ENCODE measurements at regions of chr2 and their contacts with region 1.

Region 1: GRCh38 chr2:39069136-39069515 is 51.7 kb downstream of the SOS1 start:
- DNase-seq: no peak
- H3K4me3 ChIP-seq: no peak overlapping the region
- H3K27ac ChIP-seq: no peak overlapping the region
- H3K4me1 ChIP-seq: no peaks in the 10 kb centered on the region
- H3K27me3 ChIP-seq: no peaks in the 10 kb centered on the region
- CTCF ChIP-seq: no peak
- POLR2A ChIP-seq: no peak

Region 2: DNA sequence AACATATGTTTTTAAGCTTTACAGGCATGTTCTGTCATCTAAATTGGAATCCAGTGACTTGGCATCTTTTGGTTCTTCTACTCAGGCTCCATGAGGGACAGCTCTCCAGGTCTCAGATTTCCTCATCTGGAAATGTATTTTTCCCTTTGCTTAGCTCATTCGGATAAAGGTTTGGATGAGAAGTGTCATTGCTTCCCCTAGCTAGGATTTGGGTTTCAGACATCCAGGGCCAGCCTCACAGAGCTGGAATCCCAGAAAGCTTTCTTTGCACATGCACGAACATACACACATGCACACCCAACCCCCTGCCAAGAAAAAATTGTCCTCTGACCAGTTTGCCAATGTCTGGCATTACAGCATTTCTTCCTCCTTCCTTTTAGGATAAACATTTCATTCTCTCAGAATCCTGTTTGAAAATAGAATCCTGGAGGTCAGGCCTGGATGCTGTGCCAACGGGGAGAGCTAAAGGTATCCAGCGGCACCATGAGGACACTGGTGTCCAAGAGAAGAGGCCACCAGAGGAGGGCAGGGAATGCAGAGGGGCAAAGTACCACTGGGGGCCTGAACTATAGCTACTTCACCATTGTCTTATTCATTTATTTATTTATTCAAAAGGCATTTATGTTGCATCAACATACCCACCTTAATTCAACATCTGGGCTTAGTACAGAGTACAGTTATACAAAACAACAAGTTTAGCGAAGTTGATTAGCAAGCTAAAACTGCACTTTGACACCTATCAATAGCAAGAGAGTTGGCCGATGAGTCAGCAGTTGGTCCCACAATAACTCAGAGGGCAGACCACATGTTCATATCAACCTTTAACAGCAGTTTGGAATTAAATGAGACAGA is 594.2 kb before region 1 on chr2:
- CTCF ChIA-PET with region 1: no interaction called
- POLR2A ChIA-PET with region 1: interaction called, 10 read pairs
- dilution Hi-C with region 1: no loop called
- intact Hi-C with region 1: no loop called
- DNase-seq: no peak
- H3K4me3 ChIP-seq: no peak overlapping the region
- H3K27ac ChIP-seq: no peak overlapping the region
- H3K4me1 ChIP-seq: no peaks in the 10 kb centered on the region
- H3K27me3 ChIP-seq: peaks cover 5 to 6% of the 10 kb centered on the region in 2 experiments
- CTCF ChIP-seq: no peak
- POLR2A ChIP-seq: no peak

Region 3: GRCh38 chr2:38997781-38998180 is 71.3 kb before region 1 on chr2:
- CTCF ChIA-PET with region 1: no interaction called
- POLR2A ChIA-PET with region 1: no interaction called
- dilution Hi-C with region 1: no loop called
- intact Hi-C with region 1: no loop called
- DNase-seq: peak; percentile 88
- H3K4me3 ChIP-seq: no peak overlapping the region
- H3K27ac ChIP-seq: peak overlapping the region; percentile 48
- H3K4me1 ChIP-seq: peaks cover 8% of the 10 kb centered on the region
- H3K27me3 ChIP-seq: no peaks in the 10 kb centered on the region
- CTCF ChIP-seq: no peak
- POLR2A ChIP-seq: no peak

Region 4: DNA sequence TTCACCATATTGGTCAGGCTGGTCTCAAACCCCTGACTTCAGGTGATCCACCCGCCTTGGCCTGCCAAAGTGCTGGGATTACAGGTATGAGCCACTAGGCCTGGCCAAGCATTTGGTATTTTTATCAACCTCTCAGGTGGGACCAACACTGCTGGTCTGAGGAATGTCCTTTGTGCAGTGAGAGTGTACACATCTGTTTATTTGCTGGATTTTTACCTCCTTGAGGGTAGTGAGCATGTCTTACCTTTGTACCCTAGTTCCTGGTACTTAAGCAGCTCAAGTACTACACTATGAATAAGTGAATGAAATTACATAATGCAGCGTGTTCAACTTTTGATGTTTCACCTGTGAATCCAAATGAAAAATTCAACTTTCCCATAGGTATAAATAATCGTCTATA is 21.9 kb after region 1 on chr2:
- CTCF ChIA-PET with region 1: no interaction called
- POLR2A ChIA-PET with region 1: interaction called, 12 read pairs
- dilution Hi-C with region 1: no loop called
- intact Hi-C with region 1: no loop called
- DNase-seq: no peak
- H3K4me3 ChIP-seq: no peak overlapping the region
- H3K27ac ChIP-seq: no peak overlapping the region
- H3K4me1 ChIP-seq: no peaks in the 10 kb centered on the region
- H3K27me3 ChIP-seq: no peaks in the 10 kb centered on the region
- CTCF ChIP-seq: no peak
- POLR2A ChIP-seq: no peak